Activated CD4-positive, alpha-beta T cell treated with anti-CD3 and anti-CD28 coated beads for 36 hours (primary cell): ENCODE measurements at regions of chr14 and their contacts with region 1.

Region 1: GRCh38 chr14:24332268-24332993 is 2.4 kb downstream of the ADCY4 start:
- DNase-seq: peak; percentile 91
- ATAC-seq: peak; percentile 82
- H3K4me3 Mint-ChIP-seq: peak overlapping the region; percentile 53
- H3K27ac Mint-ChIP-seq: peak overlapping the region; percentile 29
- H3K4me1 Mint-ChIP-seq: peaks cover 27% of the 10 kb centered on the region
- H3K27me3 Mint-ChIP-seq: peaks cover 24% of the 10 kb centered on the region

Region 2: GRCh38 chr14:24215495-24216344 is 116.7 kb before region 1 on chr14 and contains the start of gene MDP1:
- CTCF ChIA-PET with region 1: interaction called, 8 read pairs
- POLR2A ChIA-PET with region 1: interaction called, 3 read pairs
- intact Hi-C with region 1: loop called in 1 of 2 experiments (anchors 1 kb)
- DNase-seq: peak; percentile 93
- ATAC-seq: peak; percentile 76
- H3K4me3 Mint-ChIP-seq: peak within 1 kb of the TSS; percentile 92
- H3K27ac Mint-ChIP-seq: peak within 1 kb of the TSS; percentile 95
- H3K4me1 Mint-ChIP-seq: peaks cover 44% of the 10 kb centered on the region
- H3K27me3 Mint-ChIP-seq: no peaks in the 10 kb centered on the region
- total RNA-seq, gene MDP1: 4.5 to 11.7 TPM

Region 3: DNA sequence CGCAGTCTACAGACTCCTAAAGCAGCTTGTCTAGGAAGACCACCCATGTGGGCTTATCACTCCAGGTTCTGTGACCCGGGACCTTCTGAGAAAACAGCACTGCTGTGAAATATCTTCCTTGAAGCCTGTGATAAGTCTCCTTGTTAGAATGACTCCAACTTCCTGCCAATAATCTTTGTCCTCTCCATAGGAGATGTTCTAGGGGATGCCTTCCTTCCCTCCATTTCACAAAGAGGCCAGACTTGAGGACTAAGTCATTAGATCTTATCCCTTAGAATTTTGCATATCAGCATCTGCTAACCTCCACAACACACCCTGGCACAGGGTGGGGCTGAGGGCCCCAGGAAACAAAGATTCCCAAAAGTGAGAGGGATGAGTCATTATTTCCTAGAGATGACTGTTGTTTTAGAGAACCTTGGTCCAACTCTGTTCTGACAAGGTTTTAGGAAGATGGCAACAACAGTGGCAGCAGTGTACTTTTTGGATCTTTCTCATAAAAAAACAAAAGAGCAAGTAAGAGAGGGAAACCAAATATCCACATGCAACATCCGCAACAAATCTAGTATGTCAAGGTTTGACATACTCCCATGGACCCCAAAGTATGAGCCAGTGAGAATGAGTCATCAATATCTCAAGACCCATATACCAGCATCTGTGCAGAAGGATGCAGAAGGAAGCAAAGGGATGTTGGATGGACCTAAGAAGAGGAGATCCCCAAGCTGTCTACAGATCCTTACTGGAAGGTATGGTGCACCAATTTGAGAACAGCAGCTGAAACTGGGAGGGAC is 15.1 kb before region 1 on chr14:
- CTCF ChIA-PET with region 1: interaction called, 13 read pairs
- POLR2A ChIA-PET with region 1: no interaction called
- intact Hi-C with region 1: no loop called
- DNase-seq: no peak
- ATAC-seq: peak; percentile 54
- H3K4me3 Mint-ChIP-seq: no peak overlapping the region
- H3K27ac Mint-ChIP-seq: peak overlapping the region; percentile 35
- H3K4me1 Mint-ChIP-seq: peaks cover 42% of the 10 kb centered on the region
- H3K27me3 Mint-ChIP-seq: no peaks in the 10 kb centered on the region

Region 4: GRCh38 chr14:24366721-24367513 is 34.5 kb after region 1 on chr14:
- CTCF ChIA-PET with region 1: interaction called, 13 read pairs
- POLR2A ChIA-PET with region 1: interaction called, 4 read pairs
- intact Hi-C with region 1: loop called in 1 of 2 experiments (anchors 2 kb)
- DNase-seq: peak; percentile 47
- ATAC-seq: peak; percentile 21
- H3K4me3 Mint-ChIP-seq: peak overlapping the region; percentile 23
- H3K27ac Mint-ChIP-seq: no peak overlapping the region
- H3K4me1 Mint-ChIP-seq: peaks cover 28% of the 10 kb centered on the region
- H3K27me3 Mint-ChIP-seq: peaks cover 41% of the 10 kb centered on the region

Region 5: DNA sequence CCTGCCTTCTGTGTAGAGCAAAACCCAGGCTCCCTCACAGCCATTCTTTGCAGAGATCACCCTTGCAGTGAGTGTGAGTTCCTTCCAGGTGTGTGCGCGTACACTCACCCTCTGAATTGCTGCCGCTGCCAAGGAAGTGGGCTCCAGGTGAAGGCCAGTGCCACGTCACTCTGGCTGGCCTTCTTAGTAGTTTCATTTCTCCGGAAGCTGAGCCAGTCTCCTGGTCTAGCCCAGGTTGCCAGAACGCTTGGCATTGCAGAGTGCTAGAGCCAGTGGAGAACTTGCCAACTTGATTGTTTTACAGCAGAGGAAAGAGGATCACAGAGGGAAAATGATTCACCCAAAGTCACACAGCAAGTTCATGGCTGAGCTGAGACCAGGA is 86.1 kb after region 1 on chr14:
- CTCF ChIA-PET with region 1: interaction called, 35 read pairs
- POLR2A ChIA-PET with region 1: no interaction called
- intact Hi-C with region 1: no loop called
- DNase-seq: no peak
- ATAC-seq: no peak
- H3K4me3 Mint-ChIP-seq: no peak overlapping the region
- H3K27ac Mint-ChIP-seq: no peak overlapping the region
- H3K4me1 Mint-ChIP-seq: no peaks in the 10 kb centered on the region
- H3K27me3 Mint-ChIP-seq: no peaks in the 10 kb centered on the region

Region 6: DNA sequence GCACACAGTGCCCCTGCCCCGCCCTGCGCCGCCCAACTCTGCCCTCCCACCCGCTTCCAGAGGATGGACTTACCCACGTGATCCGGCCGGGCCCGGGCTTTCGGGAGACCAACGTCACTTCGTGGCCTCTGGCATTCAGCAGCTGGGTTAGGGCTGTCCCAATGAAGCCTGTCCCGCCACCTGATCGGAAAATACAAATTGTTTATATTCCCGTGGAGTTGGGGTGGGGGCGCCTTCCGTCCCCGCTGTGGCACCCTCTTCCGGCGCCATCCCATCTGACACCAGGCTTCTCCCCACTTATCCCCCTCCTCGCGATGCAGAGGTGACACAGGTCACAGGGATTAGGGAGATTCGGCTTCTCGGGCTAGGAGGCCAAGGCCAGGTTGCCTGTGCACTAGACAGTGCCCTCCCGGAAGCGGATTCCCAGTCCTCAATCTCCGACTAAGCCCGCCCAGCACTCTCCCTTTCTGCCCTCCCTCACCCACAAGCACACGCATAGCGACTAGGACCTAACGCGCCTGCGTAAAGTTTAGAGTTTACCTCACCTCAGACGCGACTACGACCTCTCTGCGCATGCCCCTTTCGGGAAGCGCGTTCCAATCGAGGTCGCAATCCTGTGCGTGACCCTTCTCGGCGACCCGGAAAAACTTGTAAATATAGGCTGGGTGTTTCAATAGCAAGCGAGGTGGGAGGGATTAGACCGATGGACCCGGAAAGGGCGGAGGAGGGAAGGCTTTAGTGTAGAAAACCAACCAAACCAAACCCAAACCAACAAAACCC is 110.0 kb after region 1 on chr14 and contains the start of gene SDR39U1:
- CTCF ChIA-PET with region 1: interaction called, 125 read pairs
- POLR2A ChIA-PET with region 1: interaction called, 9 read pairs
- intact Hi-C with region 1: no loop called
- DNase-seq: peak; percentile 98
- ATAC-seq: peak; percentile 92
- H3K4me3 Mint-ChIP-seq: peak within 1 kb of the TSS; percentile 97
- H3K27ac Mint-ChIP-seq: peak within 1 kb of the TSS; percentile 99
- H3K4me1 Mint-ChIP-seq: peaks cover 41% of the 10 kb centered on the region
- H3K27me3 Mint-ChIP-seq: no peaks in the 10 kb centered on the region
- total RNA-seq, gene SDR39U1: 40.9 to 47.8 TPM